OCI-LY7 (cell line): ENCODE measurements at regions of chr5 and their contacts with region 1.

Region 1: GRCh38 chr5:77437194-77437593 is 54.9 kb downstream of the WDR41 start:
- DNase-seq: peak; percentile 7
- H3K4me3 ChIP-seq: no peak overlapping the region
- H3K27ac ChIP-seq: no peak overlapping the region
- H3K4me1 ChIP-seq: no peaks in the 10 kb centered on the region
- CTCF ChIP-seq: peak; percentile 46

Region 2: GRCh38 chr5:77426670-77427069 is 10.5 kb before region 1 on chr5:
- CTCF ChIA-PET with region 1: no interaction called
- POLR2A ChIA-PET with region 1: interaction called, 12 read pairs
- intact Hi-C with region 1: no loop called
- DNase-seq: no peak
- H3K4me3 ChIP-seq: no peak overlapping the region
- H3K27ac ChIP-seq: no peak overlapping the region
- H3K4me1 ChIP-seq: no peaks in the 10 kb centered on the region
- CTCF ChIP-seq: no peak